Psoas muscle (tissue), 8 donors: ENCODE measurements at regions of chr4 and their contacts with region 1.

Region 1: DNA sequence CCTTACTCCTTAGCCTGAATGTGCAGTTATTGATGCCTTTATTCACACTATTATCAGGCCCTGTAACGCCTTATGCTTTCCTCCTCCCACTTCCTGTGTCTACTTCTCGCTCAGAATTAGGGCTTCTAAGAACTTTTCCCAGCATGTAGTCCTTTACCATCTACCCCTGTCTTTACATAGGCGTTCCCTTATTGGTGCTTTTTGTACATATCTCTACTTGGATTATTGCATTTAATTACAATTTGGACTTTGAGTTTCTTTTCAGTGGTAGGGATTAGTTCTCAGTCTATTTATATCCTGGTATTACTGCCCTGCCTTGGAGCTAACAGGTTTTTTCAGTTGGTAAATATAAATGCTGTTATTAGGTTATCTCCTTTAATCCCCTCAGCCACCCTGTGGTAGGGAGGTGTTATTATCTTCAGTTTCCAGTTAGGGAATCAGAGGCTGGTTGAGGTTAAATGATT is 84.0 kb downstream of the RBPJ start:
- DNase-seq: no peak
- ATAC-seq: peak in 3 of 4 donors; percentile 36 to 66 (median 51)
- H3K4me3 ChIP-seq: no peak overlapping the region
- H3K27ac ChIP-seq: peak overlapping the region; percentile 0
- H3K4me1 ChIP-seq: peaks cover 16% of the 10 kb centered on the region
- H3K27me3 ChIP-seq: no peaks in the 10 kb centered on the region
- CTCF ChIP-seq: peak; percentile 25

Region 2: DNA sequence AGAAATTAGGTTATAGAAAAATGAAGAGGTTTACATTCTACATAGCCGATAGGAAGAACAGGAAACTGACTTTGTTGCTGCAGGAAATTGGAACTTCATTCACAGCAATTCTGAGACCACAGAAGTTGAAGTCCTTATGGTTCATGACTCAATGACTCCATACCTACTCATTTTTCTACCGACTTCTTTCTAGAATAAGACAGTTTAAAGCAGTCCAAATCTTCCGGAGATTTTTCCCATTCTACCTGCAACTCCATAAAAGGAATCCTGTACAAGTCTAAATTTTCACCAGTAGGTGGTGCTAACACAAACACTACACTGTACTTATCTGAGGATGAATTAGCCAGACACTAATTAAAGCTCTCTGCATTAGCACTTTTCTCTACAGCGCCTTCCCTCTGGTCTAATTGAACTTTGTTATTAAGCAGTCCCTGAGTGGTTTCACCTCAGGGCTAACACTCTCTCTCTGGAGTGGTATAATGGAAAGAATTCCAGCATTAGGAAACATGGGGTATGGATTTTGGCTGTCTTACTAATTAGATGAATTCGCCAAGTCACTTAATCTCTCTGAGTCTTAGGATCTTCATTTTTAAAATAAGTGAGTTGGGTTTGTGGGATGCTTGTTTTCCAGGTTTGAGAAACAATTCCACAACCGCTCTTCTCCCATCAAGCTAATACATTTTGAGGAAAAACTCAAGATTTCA is 322.8 kb before region 1 on chr4:
- intact Hi-C with region 1: loop called in 1 of 2 experiments (anchors 5 kb)
- DNase-seq: no peak
- ATAC-seq: peak in 1 of 4 donors; percentile 49
- H3K4me3 ChIP-seq: no peak overlapping the region
- H3K27ac ChIP-seq: no peak overlapping the region
- H3K4me1 ChIP-seq: peaks cover 34% of the 10 kb centered on the region
- H3K27me3 ChIP-seq: no peaks in the 10 kb centered on the region
- CTCF ChIP-seq: peak; percentile 63

Region 3: GRCh38 chr4:26330186-26330787 is 74.5 kb before region 1 on chr4:
- intact Hi-C with region 1: loop called (anchors 2 to 5 kb)
- DNase-seq: no peak
- ATAC-seq: peak; percentile 67 to 91 (median 82)
- H3K4me3 ChIP-seq: no peak overlapping the region
- H3K27ac ChIP-seq: no peak overlapping the region
- H3K4me1 ChIP-seq: peaks cover 51% of the 10 kb centered on the region
- H3K27me3 ChIP-seq: no peaks in the 10 kb centered on the region
- CTCF ChIP-seq: peak; percentile 72

Region 4: GRCh38 chr4:26372525-26373172 is 32.1 kb before region 1 on chr4:
- intact Hi-C with region 1: loop called in 1 of 2 experiments (anchors 5 kb)
- DNase-seq: no peak
- ATAC-seq: peak in 2 of 4 donors; percentile 30 to 40
- H3K4me3 ChIP-seq: no peak overlapping the region
- H3K27ac ChIP-seq: no peak overlapping the region
- H3K4me1 ChIP-seq: peaks cover 41% of the 10 kb centered on the region
- H3K27me3 ChIP-seq: no peaks in the 10 kb centered on the region
- CTCF ChIP-seq: no peak